CD8-positive, alpha-beta T cell (primary cell): ENCODE measurements at regions of chrX and their contacts with region 1.

Region 1: DNA sequence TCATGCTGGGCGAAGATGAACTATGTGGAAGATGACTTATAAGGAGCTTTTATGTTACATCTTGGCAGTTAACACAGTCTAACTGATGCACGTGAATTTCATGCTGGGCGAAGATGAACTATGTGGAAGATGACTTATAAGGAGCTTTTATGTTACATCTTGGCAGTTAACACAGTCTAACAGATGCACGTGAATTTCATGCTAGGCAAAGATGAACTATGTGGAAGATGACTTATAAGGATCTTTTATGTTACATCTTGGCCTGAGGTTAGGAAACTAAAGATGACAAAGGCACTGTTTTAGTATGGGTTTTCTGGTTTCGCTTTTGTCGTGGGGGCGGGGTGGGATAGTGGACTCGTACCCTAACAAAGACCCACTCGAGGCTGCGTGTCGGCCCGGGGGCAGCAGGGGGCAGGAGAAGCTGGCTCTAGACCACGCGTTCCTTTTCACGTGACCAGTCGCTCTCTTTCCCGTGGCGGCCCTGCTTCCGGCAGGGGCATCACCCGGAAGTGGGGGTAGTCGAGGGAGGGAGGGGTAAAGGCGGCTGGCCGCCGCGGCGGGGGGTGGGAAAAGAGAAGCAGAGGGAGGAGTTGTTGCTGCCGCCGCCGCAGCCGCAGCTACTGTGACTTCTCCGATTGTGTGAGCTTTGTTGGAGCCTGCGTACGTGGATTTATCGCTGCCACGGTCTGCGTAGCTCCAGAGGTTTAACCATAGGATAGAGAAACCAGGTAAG is at the start of gene ATP7A:
- DNase-seq: peak; percentile 79 to 96 (median 89)
- ATAC-seq: peak; percentile 91
- H3K4me3 ChIP-seq: peak within 1 kb of the TSS; percentile 59 to 82
- H3K4me3 Mint-ChIP-seq: peak within 1 kb of the TSS; percentile 94
- H3K27ac ChIP-seq: peak within 1 kb of the TSS; percentile 80 to 85
- H3K27ac Mint-ChIP-seq: peak within 1 kb of the TSS; percentile 98
- H3K4me1 ChIP-seq: peaks cover 15% of the 10 kb centered on the region
- H3K4me1 Mint-ChIP-seq: peaks cover 21% of the 10 kb centered on the region
- H3K27me3 ChIP-seq: no peaks in the 10 kb centered on the region
- H3K27me3 Mint-ChIP-seq: no peaks in the 10 kb centered on the region
- CTCF ChIP-seq: peak; percentile 41
- total RNA-seq, gene ATP7A: 14.3 to 15.3 TPM

Region 2: DNA sequence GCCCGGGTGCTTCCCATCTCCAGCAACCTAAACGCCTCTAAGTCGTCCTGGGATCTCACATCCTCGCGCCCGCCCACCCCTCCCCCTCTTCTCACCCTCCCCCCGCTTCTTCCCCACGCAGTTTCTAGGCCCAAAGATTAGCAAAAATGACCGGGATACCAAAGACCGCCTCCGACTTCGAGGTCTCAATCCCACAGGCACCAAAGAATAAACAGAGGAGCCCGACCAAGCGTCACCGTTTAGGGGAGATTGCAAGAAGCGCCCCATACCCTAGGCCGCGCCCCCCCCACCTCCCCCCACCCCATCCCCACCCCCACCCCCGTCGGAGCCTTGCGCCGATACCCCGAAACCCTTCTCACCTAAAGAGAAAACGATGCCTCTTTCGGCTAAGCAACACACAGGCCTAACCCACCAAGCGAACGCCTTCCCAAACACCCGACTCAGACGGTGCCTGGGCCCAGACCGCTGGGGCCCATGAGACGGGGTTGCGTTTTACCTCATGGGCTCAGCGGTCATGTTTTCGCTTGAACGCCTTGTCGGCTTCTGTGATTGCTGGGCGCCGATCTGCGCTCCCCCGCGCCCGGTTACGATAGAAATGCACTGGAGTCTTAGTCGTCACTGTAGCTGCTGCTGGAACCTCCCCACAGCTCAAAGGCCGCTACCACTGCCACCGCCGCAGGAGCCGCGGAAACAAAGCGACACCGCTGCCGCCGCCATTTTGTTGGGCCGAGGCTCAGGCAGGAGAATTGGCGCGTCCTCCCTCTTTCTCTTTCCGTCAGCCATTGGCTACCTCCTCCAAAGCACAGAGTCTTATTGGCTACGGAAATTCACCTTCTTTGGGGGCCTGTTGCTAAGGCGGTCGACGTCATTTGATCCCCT is 124.5 kb before region 1 on chrX and contains the start of gene ATRX:
- CTCF ChIA-PET with region 1: no interaction called
- POLR2A ChIA-PET with region 1: no interaction called
- intact Hi-C with region 1: loop called in 1 of 2 experiments (anchors 5 kb)
- DNase-seq: peak; percentile 55 to 91 (median 73)
- ATAC-seq: peak; percentile 91
- H3K4me3 ChIP-seq: peak within 1 kb of the TSS; percentile 85 to 93
- H3K4me3 Mint-ChIP-seq: peak within 1 kb of the TSS; percentile 100
- H3K27ac ChIP-seq: peak within 1 kb of the TSS; percentile 92 to 93
- H3K27ac Mint-ChIP-seq: peak within 1 kb of the TSS; percentile 100
- H3K4me1 ChIP-seq: peaks cover 16% of the 10 kb centered on the region
- H3K4me1 Mint-ChIP-seq: peaks cover 38% of the 10 kb centered on the region
- H3K27me3 ChIP-seq: no peaks in the 10 kb centered on the region
- H3K27me3 Mint-ChIP-seq: no peaks in the 10 kb centered on the region
- CTCF ChIP-seq: no peak
- total RNA-seq, gene ATRX: 61.2 to 65.7 TPM

Region 3: GRCh38 chrX:77962068-77962902 is 52.0 kb after region 1 on chrX:
- CTCF ChIA-PET with region 1: no interaction called
- POLR2A ChIA-PET with region 1: no interaction called
- intact Hi-C with region 1: loop called (anchors 5 to 10 kb)
- DNase-seq: peak in 5 of 9 experiments; percentile 0 to 50 (median 21)
- ATAC-seq: peak; percentile 48
- H3K4me3 ChIP-seq: no peak overlapping the region
- H3K4me3 Mint-ChIP-seq: peak overlapping the region; percentile 80
- H3K27ac ChIP-seq: no peak overlapping the region
- H3K27ac Mint-ChIP-seq: peak overlapping the region; percentile 94
- H3K4me1 ChIP-seq: peaks cover 5% of the 10 kb centered on the region
- H3K4me1 Mint-ChIP-seq: peaks cover 35% of the 10 kb centered on the region
- H3K27me3 ChIP-seq: no peaks in the 10 kb centered on the region
- H3K27me3 Mint-ChIP-seq: no peaks in the 10 kb centered on the region
- CTCF ChIP-seq: no peak

Region 4: GRCh38 chrX:78092296-78092695 is 182.0 kb after region 1 on chrX:
- CTCF ChIA-PET with region 1: no interaction called
- POLR2A ChIA-PET with region 1: no interaction called
- intact Hi-C with region 1: loop called in 1 of 2 experiments (anchors 1 kb)
- DNase-seq: peak in 5 of 9 experiments; percentile 14 to 47 (median 24)
- ATAC-seq: peak; percentile 75
- H3K4me3 ChIP-seq: no peak overlapping the region
- H3K4me3 Mint-ChIP-seq: no peak overlapping the region
- H3K27ac ChIP-seq: no peak overlapping the region
- H3K27ac Mint-ChIP-seq: no peak overlapping the region
- H3K4me1 ChIP-seq: no peaks in the 10 kb centered on the region
- H3K4me1 Mint-ChIP-seq: peaks cover 4% of the 10 kb centered on the region
- H3K27me3 ChIP-seq: no peaks in the 10 kb centered on the region
- H3K27me3 Mint-ChIP-seq: no peaks in the 10 kb centered on the region
- CTCF ChIP-seq: peak; percentile 36

Region 5: DNA sequence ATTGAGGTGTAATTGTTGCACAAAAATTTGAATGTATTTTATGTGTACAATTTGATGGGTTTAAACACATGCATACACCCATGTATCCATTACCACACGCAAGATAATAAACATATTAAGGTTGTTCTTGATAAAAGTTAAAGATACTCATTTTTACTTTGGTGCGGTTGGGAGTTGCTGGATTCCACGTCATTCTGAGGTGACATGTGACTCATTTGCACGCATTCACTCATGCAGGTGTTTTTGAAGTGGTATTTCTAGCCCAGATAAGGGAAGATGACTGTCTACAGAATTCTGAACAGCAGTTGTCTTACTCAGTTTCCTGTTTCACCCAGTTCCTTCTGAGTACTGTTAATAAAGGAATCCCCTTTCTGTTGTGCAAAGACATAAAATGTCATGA is 606.9 kb after region 1 on chrX:
- CTCF ChIA-PET with region 1: no interaction called
- POLR2A ChIA-PET with region 1: no interaction called
- intact Hi-C with region 1: loop called in 1 of 2 experiments (anchors 10 kb)
- DNase-seq: peak in 8 of 9 experiments; percentile 1 to 90 (median 43)
- ATAC-seq: peak; percentile 89
- H3K4me3 ChIP-seq: no peak overlapping the region
- H3K4me3 Mint-ChIP-seq: peak overlapping the region; percentile 16
- H3K27ac ChIP-seq: no peak overlapping the region
- H3K27ac Mint-ChIP-seq: peak overlapping the region; percentile 90
- H3K4me1 ChIP-seq: peaks cover 20% of the 10 kb centered on the region
- H3K4me1 Mint-ChIP-seq: peaks cover 33% of the 10 kb centered on the region
- H3K27me3 ChIP-seq: no peaks in the 10 kb centered on the region
- H3K27me3 Mint-ChIP-seq: no peaks in the 10 kb centered on the region
- CTCF ChIP-seq: no peak